ENCODE measurements at regions of chr19 and their contacts with region 1.

Region 1: DNA sequence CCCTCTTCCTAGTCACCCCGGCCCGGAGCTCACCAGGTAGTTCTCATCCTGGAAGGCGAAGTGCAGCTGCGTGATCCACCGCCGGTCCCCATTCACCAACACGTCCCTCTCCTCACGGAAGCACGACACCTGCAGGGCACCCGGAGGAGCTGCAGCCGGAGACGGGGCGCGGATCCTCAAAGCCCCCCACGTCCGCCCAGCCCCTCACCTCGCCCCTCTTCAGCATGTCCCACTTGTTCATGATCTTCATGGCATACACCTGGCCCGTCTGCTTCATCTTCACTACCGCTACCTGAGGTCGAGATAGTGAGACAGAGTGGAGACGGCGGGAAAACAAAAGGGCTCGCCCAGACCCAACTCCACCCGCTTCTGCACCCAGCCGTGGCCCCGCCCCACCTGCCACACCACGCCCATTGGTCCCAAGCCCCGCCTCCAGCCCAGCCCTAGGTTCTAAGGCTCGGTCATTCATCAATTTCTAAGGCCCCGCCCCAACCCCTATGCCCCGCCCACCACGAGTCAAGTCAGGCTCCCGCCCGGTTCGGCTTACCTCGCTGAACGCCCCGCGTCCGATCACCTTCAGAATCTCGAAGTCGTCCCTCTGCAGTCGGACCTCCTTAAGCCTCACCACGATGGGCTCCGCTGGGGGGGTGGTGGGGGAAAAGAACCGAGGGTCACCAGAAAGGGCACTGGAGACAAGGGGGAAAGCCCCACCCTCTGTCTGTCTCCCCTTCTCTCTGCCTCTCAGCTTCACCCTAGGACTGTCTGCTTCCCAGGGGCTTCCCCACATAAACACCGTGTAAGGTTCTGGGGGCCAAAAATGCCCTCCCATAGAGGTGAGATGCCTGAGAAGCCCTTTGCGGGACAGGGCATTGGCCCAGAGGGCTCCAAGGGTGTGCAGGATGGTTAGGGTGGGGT is 2.8 kb downstream of the DMPK start:
- DNase-seq: peak; percentile 83
- H3K4me3 Mint-ChIP-seq: peak overlapping the region; percentile 71
- H3K27ac Mint-ChIP-seq: peak overlapping the region; percentile 24
- H3K4me1 Mint-ChIP-seq: peaks cover 16% of the 10 kb centered on the region
- H3K27me3 Mint-ChIP-seq: peaks cover 20% of the 10 kb centered on the region

Region 2: GRCh38 chr19:45681391-45682015 is 98.0 kb before region 1 on chr19:
- intact Hi-C with region 1: loop called (anchors 1 kb)
- DNase-seq: peak; percentile 87
- H3K4me3 Mint-ChIP-seq: peak overlapping the region; percentile 80
- H3K27ac Mint-ChIP-seq: peak overlapping the region; percentile 82
- H3K4me1 Mint-ChIP-seq: peaks cover 20% of the 10 kb centered on the region
- H3K27me3 Mint-ChIP-seq: peaks cover 2% of the 10 kb centered on the region

Region 3: DNA sequence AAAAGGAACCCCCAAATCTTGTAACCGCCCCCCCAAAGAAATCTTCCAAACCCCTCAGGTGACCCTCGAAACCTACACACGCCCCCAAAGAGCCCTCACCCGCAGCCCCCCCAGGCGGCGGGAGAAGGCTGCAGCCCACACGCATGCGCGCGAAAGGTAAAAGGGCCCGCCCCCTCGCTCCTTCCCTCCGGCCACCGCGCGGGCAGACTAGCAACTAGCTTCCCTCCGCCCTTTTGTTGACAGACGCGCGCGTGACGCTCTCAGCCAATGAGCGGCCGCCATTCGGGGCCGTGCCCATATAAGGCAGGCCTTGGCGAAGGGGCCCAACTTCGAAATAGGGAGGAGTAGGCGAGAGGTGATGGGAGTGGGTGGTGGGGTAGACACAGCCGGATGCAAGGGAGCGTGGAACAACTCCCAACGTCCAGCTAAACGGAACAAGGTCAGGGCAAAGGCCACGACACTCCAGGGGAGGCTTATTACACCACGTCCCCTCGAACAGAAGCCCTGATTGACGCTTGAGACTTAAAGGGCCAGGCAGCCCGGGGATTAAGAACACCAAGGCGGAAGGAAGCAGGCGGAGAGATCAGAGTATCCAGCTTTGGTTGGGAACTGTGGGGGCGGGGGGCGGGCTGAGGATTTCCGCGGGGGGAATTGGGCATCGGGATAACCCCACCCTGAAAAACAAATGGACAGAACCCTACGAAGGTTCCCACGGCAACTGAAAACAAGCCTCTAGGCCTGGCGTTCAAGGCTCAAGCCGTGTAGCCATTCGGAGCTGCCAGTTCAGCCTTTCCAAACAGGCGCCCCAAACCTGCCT is 62.1 kb before region 1 on chr19:
- intact Hi-C with region 1: loop called (anchors 1 kb)
- DNase-seq: peak; percentile 99
- H3K4me3 Mint-ChIP-seq: peak overlapping the region; percentile 96
- H3K27ac Mint-ChIP-seq: peak overlapping the region; percentile 96
- H3K4me1 Mint-ChIP-seq: peaks cover 40% of the 10 kb centered on the region
- H3K27me3 Mint-ChIP-seq: no peaks in the 10 kb centered on the region

Region 4: GRCh38 chr19:46016426-46017094 is 237.1 kb after region 1 on chr19:
- intact Hi-C with region 1: loop called (anchors 5 kb)
- DNase-seq: peak; percentile 74
- H3K4me3 Mint-ChIP-seq: peak overlapping the region; percentile 89
- H3K27ac Mint-ChIP-seq: peak overlapping the region; percentile 78
- H3K4me1 Mint-ChIP-seq: peaks cover 15% of the 10 kb centered on the region
- H3K27me3 Mint-ChIP-seq: peaks cover 12% of the 10 kb centered on the region